ENCODE measurements at regions of chr9 and their contacts with region 1.

Region 1: DNA sequence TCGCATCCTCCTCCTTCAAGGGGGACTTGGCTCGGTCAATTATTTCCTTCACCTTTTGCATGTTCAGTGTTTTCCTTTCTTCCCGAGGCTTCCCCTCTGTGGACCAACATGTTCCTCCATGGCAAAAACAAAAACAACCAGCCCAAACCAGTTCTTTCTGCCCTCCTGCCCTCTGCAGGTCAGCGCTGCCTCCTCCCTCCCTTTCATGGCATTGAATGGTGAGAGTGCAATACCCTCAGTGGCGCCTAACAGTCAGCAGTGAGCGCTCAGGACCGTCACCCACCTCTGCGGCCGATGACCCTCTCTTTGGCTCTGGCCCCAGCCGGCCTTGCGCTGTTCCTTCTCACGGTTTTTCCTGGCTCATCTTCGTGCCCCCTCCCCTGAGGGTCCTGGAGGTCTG is 34.4 kb upstream of the GNE start:
- DNase-seq: peak in 1 of 2 experiments; percentile 48
- H3K4me3 ChIP-seq: no peak overlapping the region
- H3K27ac ChIP-seq: no peak overlapping the region
- H3K4me1 ChIP-seq: peaks cover 0 to 6% (median 2%) of the 10 kb centered on the region in 4 experiments; a peak in 4 of 7 replicates
- H3K27me3 ChIP-seq: no peaks in the 10 kb centered on the region
- CTCF ChIP-seq: peak; percentile 22 to 41 (median 29); a peak in 3 of 4 replicates
- EP300 ChIP-seq: no peak
- POLR2A ChIP-seq: no peak
- RAD21 ChIP-seq: peak in 1 of 2 experiments; percentile 30; a peak in 1 of 4 replicates

Region 2: GRCh38 chr9:36218411-36218901 is 74.2 kb before region 1 on chr9:
- CTCF ChIA-PET with region 1: no interaction called
- POLR2A ChIA-PET with region 1: no interaction called
- DNase-seq: no peak
- H3K4me3 ChIP-seq: no peak overlapping the region
- H3K27ac ChIP-seq: no peak overlapping the region
- H3K4me1 ChIP-seq: no peaks in the 10 kb centered on the region
- H3K27me3 ChIP-seq: no peaks in the 10 kb centered on the region
- CTCF ChIP-seq: no peak
- EP300 ChIP-seq: no peak
- POLR2A ChIP-seq: no peak
- RAD21 ChIP-seq: no peak

Region 3: GRCh38 chr9:36264896-36265295 is 27.7 kb before region 1 on chr9:
- CTCF ChIA-PET with region 1: no interaction called
- POLR2A ChIA-PET with region 1: no interaction called
- DNase-seq: no peak
- H3K4me3 ChIP-seq: no peak overlapping the region
- H3K27ac ChIP-seq: no peak overlapping the region
- H3K4me1 ChIP-seq: no peaks in the 10 kb centered on the region
- H3K27me3 ChIP-seq: no peaks in the 10 kb centered on the region
- CTCF ChIP-seq: no peak
- EP300 ChIP-seq: no peak
- POLR2A ChIP-seq: no peak
- RAD21 ChIP-seq: no peak

Region 4: DNA sequence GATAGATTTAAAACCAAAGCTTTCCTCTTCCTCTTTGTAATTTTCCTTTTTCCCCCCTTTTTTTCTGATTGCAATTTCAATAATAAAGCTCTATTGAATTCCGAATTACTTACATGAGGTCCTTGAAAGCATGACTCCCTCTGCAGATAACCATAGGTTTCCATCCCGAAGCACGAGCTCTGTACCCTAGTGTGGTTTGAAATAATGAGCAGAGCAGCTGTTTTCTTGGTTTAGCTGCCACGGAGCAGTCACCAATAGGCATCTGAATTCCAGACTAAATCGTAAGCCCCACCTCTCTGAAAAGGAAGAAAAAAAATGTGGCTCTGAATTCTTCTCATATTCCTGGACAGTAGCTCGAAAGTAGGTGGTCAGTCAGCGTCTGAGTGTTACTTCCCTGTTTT is 15.8 kb before region 1 on chr9:
- CTCF ChIA-PET with region 1: interaction called, 11 read pairs
- POLR2A ChIA-PET with region 1: interaction called, 4 read pairs
- DNase-seq: no peak
- H3K4me3 ChIP-seq: no peak overlapping the region
- H3K27ac ChIP-seq: no peak overlapping the region
- H3K4me1 ChIP-seq: no peaks in the 10 kb centered on the region
- H3K27me3 ChIP-seq: no peaks in the 10 kb centered on the region; a peak in 1 of 7 replicates
- CTCF ChIP-seq: no peak
- EP300 ChIP-seq: no peak
- POLR2A ChIP-seq: no peak
- RAD21 ChIP-seq: no peak

Region 5: GRCh38 chr9:36535107-36535506 is 242.5 kb after region 1 on chr9:
- CTCF ChIA-PET with region 1: no interaction called
- POLR2A ChIA-PET with region 1: no interaction called
- DNase-seq: no peak
- H3K4me3 ChIP-seq: no peak overlapping the region
- H3K27ac ChIP-seq: no peak overlapping the region
- H3K4me1 ChIP-seq: no peaks in the 10 kb centered on the region
- H3K27me3 ChIP-seq: no peaks in the 10 kb centered on the region
- CTCF ChIP-seq: no peak
- EP300 ChIP-seq: no peak
- POLR2A ChIP-seq: no peak
- RAD21 ChIP-seq: no peak